ENCODE measurements at regions of chr22 and their contacts with region 1.

Region 1: DNA sequence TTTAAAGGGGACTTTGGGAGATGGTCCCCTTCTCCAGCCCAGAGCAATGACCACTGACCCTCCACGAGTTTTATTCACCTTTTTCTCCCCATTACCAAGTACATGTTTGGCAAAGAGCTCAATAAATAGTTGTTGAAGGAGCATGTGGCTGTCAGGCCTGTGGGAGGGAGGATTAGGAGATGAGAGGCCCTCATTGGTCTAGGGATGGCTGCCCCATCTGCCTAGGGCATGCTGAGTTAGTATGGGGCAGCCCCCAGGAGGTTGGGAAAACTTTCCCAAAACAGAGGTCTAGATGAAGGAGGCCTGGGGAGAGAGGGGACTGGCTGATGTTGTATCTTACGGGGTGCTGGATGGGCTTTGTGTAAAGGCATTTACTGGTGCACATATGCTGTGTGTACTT is 10.6 kb downstream of the MAFF start:
- DNase-seq: no peak

Region 2: DNA sequence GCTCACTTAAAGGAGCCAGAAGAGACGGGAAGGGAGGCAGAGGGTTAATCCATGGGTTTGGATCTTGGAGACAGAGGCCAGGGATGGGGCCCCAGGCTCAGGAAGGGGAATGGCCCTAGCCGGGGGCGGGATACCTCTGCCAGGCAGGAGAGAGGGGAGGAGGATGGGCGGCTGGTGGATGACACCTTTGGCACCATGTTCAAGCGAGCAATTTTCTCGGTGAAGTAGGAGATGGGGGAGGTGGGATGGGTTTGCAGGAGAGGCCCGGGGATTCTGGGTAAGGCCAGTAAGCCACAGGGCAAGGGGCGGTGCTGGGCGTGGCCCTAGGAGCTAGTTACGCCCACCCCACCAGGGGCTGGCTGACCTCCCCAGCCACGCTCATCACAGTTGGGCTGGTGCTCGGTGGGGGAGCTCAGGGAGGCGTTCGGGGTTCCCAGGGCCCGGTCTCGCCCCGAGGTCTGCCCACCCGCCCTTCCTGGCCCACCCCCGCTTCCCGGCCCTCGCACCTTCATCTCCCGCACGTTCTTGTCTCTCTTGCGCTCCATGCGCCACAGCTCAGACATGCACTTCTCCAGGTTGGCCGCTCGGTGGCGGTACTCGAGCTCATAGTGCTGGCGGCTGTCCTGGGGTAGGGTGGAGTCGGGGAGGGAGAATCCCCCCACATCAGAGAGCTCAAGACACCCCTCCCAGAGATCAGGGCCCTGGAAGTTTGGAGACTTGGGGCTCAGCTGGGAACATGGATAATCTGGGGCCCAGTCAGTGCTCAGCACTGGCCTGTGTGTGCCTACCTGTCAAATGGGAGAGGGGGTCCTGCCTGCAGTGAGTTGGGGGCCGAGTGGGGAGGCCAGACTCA is 114.7 kb before region 1 on chr22:
- intact Hi-C with region 1: no loop called
- DNase-seq: no peak

Region 3: DNA sequence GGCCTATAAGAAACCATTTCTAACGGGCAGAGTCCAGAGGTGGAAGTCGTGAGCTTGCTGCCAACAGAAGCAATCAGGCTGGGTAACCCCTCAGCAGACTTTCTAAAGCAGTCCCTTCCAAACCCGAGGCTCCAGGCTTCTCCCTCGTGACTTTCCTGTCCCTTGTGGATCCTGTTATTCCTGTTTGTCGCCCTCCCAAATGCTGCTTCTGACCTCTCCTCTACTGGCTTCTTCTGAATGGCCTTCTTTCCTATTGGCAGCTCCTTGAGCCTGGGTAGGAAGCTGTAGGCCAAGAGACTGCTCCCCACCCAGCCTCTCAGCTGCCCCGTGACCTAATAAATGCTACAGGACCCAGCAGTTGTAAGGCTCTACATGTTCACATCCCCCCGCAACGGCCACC is 24.3 kb after region 1 on chr22:
- intact Hi-C with region 1: loop called in 1 of 2 experiments (anchors 1 kb)
- DNase-seq: no peak